ENCODE measurements at regions of chr2 and their contacts with region 1.

Region 1: DNA sequence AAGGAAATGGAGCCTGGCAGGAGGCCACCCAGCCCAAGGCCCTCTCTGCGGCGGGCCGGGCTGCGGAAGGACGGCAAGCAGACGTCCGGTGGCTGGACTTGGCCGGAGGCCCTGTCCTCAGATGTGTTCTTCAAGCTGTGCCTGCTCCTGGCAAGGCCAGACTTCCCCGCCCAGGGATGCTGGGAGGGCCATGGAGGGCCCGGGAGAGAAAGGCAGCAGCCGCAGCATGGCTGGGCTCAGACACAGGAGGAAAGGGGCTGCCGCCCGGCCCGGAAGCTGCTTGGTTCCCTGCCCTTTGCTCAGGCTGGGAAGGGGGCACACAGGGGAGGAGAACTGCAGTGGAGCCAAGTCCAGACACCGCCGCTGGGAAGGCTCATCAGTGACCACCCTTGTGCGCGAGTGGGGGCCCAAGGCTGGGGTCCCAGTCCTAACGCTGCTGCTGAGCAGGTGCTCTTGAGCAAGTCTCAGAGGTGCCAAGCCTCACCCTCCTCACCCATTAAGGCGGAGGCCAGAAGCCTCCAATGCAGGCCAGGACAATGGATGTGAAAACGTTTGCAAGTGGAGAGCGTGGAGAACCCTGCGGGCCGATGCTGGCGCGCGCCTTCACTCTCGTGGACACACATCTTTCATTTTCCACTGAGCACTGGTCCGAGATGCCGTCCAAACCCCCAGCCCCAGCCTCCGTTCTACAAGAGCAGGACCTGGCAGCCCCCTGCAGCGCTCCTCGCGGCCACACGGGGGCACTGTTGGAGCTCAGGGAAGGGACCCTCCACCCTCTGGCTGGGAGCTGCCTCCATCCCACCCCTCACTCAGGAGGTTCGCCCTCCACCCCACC is 7.9 kb downstream of the CROCC2 start:
- DNase-seq: peak; percentile 54 to 79 (median 74)
- ATAC-seq: peak; percentile 89
- H3K4me3 ChIP-seq: no peak overlapping the region
- H3K27ac ChIP-seq: no peak overlapping the region
- H3K4me1 ChIP-seq: peaks cover 0 to 27% of the 10 kb centered on the region in 2 experiments; a peak in 2 of 5 replicates
- H3K27me3 ChIP-seq: peaks cover 0 to 38% of the 10 kb centered on the region in 2 experiments; a peak in 2 of 5 replicates
- CTCF ChIP-seq: peak; percentile 59 to 72 (median 70)
- EP300 ChIP-seq: no peak
- POLR2A ChIP-seq: no peak
- RAD21 ChIP-seq: peak in 1 of 2 experiments; percentile 59; a peak in 2 of 4 replicates

Region 2: DNA sequence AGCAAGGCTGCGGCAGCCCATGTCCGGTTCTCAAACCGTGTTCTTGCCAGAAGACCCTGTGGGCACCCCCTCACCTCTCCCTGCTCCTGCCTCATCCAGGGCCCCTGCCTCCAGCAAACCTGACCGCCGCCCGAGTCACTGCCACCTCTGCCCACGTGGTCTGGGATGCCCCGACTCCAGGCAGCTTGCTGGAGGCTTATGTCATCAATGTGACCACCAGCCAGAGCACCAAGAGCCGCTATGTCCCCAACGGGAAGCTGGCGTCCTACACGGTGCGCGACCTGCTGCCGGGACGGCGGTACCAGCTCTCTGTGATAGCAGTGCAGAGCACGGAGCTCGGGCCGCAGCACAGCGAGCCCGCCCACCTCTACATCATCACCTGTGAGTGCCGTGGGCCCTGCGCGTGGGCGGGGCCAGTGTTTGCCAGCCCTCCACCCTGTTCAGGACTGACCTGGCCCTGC is 155.8 kb after region 1 on chr2:
- CTCF ChIA-PET with region 1: no interaction called
- POLR2A ChIA-PET with region 1: no interaction called
- in situ Hi-C with region 1: no loop called
- intact Hi-C with region 1: loop called (anchors 10 kb)
- DNase-seq: peak in 2 of 4 experiments; percentile 32 to 42
- ATAC-seq: no peak
- H3K4me3 ChIP-seq: no peak overlapping the region
- H3K27ac ChIP-seq: no peak overlapping the region
- H3K4me1 ChIP-seq: peaks cover 0 to 34% of the 10 kb centered on the region in 2 experiments; a peak in 2 of 5 replicates
- H3K27me3 ChIP-seq: peaks cover 12 to 70% of the 10 kb centered on the region in 2 experiments; a peak in 3 of 5 replicates
- CTCF ChIP-seq: no peak
- EP300 ChIP-seq: no peak
- POLR2A ChIP-seq: no peak
- RAD21 ChIP-seq: no peak

Measured in K562 (cell line).